Endothelial cell of umbilical vein (primary cell): ENCODE measurements at regions of chr11 and their contacts with region 1.

Region 1: DNA sequence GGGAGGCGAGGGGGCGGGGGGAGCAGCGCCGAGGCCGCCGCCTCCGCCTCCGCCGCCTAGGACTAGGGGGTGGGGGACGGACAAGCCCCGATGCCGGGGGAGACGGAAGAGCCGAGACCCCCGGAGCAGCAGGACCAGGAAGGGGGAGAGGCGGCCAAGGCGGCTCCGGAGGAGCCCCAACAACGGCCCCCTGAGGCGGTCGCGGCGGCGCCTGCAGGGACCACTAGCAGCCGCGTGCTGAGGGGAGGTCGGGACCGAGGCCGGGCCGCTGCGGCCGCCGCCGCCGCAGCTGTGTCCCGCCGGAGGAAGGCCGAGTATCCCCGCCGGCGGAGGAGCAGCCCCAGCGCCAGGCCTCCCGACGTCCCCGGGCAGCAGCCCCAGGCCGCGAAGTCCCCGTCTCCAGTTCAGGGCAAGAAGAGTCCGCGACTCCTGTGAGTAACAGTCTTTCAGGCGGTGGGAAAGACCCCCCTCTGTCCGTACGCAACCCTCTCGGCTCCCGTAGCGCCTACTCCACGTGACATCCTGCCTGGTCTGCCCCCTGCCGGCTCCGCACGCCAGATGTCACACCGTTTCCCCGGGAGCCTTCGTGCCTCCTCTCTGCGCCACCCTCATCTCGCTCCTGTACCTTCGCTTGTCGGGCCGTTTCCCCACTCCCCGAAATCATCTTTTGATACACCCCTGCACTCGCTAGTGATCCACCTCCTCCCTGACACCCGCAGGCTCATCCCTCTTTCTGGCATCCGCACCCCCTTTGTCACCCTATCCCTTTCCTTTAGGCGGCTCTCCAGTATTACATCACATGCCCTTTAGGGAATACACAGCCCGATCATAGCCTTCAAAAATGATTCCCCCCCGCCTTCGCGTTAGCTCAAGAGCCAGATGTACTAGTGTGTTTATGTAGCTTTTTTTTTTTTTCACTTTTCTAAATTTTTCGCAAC is 598 bp downstream of the ZFP91 start:
- DNase-seq: peak; percentile 88
- H3K4me3 ChIP-seq: peak overlapping the region; percentile 59 to 92 (median 76)
- H3K27ac ChIP-seq: peak overlapping the region; percentile 95
- H3K4me1 ChIP-seq: peaks cover 38% of the 10 kb centered on the region
- H3K27me3 ChIP-seq: no peaks in the 10 kb centered on the region
- CTCF ChIP-seq: peak; percentile 84 to 92
- POLR2A ChIP-seq: peak; percentile 97

Region 2: DNA sequence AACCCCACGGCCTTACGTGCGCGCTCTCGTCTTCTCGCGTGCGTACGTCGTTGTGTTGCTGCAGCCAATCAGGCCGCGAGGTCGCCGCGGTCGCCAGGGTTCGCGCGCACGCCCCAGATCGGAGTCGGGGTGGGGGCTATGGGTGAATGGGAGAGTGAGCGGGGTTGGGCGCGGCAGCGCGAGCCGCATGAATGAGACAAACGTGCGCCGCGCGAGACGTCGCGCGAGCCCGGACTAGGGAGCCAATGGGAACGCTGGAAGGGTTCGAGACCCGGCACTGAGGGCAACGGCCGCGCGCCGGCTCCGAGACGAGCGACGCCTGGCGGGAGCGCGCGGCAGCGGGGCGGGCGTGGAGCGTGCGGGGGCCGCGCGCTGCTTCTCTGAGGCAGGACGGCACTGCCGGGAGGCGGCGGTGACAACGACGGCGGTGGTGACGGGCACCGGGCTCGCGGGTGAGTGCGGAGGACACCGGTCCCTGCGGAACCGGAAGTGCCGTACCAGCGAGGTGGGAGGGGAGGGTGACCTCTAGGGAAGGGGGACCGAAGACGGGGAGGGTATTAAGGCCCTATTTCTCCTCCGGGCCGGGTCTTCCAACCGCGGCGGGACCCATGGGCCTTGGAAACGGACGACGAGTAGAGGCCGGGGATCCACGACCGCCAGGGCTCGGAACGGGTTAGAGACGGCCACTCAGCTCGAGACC is 911.6 kb before region 1 on chr11 and contains the start of gene ZDHHC5:
- CTCF ChIA-PET with region 1: no interaction called
- POLR2A ChIA-PET with region 1: no interaction called
- dilution Hi-C with region 1: no loop called
- intact Hi-C with region 1: loop called (anchors 1 kb)
- DNase-seq: peak; percentile 100
- H3K4me3 ChIP-seq: peak within 1 kb of the TSS; percentile 67 to 95 (median 77)
- H3K27ac ChIP-seq: peak within 1 kb of the TSS; percentile 98
- H3K4me1 ChIP-seq: peaks cover 15% of the 10 kb centered on the region
- H3K27me3 ChIP-seq: no peaks in the 10 kb centered on the region
- CTCF ChIP-seq: peak; percentile 53 to 56
- POLR2A ChIP-seq: peak; percentile 93
- total RNA-seq, gene ZDHHC5: 67.4 and 74.0 TPM in 2 replicates

Region 3: DNA sequence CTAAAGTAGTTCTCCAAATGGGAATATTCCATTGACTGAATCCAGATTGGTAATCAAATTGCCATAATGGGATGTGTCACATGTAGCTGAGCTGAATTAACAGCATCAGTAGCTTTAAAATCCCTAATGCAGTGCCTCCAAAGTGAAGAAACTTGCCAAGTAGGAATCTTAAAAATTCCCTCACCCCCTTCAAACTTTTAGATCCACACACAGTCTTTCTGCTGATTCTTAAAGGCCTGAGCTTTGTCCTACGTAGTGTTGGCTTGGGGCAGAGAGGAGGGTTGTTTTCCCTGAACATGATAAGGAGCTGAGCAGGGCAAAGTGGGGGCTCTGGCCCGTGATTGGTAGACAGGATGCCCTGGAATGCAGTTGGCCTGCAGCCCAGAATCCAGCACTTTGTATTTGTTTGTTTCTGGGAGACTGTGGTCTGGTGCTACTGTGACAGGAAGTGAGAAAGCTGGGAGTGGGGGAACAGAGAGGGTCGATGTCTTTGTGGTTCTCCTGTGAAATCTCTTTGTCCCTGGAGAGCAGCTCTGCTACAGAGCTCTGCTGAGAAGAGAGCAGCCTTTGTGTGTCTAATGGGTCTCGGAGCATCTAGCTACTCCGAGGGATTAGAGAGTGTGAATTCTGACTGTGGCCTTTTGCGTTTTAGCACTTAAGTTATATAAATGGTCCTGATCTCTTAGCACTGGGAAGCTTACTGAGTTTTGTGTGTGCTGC is 801.0 kb before region 1 on chr11:
- CTCF ChIA-PET with region 1: no interaction called
- POLR2A ChIA-PET with region 1: no interaction called
- dilution Hi-C with region 1: no loop called
- intact Hi-C with region 1: loop called (anchors 2 kb)
- DNase-seq: peak; percentile 100
- H3K4me3 ChIP-seq: peak overlapping the region in 1 of 3 experiments; percentile 56
- H3K27ac ChIP-seq: peak overlapping the region; percentile 91
- H3K4me1 ChIP-seq: peaks cover 81% of the 10 kb centered on the region
- H3K27me3 ChIP-seq: no peaks in the 10 kb centered on the region
- CTCF ChIP-seq: no peak
- POLR2A ChIP-seq: peak; percentile 93

Region 4: DNA sequence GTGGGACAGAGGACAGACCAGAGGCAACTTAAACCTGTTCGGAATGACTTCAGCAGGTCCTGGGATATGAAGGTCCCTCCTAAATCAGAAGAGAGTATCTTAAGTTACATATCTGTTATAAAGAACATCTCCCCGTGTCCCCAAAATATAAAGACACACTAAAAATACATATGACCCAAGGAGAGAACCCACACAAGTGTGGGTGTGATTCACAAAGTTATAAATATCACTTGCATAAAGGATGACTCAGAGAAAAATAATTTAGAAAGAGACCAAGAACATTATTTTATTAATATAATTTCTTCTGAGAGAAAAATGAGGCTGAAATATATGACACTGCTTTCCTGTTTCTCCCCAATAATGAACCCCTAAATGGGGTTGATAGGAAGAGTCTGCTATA is 85.8 kb before region 1 on chr11:
- CTCF ChIA-PET with region 1: no interaction called
- POLR2A ChIA-PET with region 1: no interaction called
- dilution Hi-C with region 1: no loop called
- intact Hi-C with region 1: no loop called
- DNase-seq: no peak
- H3K4me3 ChIP-seq: no peak overlapping the region
- H3K27ac ChIP-seq: no peak overlapping the region
- H3K4me1 ChIP-seq: no peaks in the 10 kb centered on the region
- H3K27me3 ChIP-seq: peaks cover 0 to 1% of the 10 kb centered on the region in 2 experiments
- CTCF ChIP-seq: no peak
- POLR2A ChIP-seq: no peak

Region 5: DNA sequence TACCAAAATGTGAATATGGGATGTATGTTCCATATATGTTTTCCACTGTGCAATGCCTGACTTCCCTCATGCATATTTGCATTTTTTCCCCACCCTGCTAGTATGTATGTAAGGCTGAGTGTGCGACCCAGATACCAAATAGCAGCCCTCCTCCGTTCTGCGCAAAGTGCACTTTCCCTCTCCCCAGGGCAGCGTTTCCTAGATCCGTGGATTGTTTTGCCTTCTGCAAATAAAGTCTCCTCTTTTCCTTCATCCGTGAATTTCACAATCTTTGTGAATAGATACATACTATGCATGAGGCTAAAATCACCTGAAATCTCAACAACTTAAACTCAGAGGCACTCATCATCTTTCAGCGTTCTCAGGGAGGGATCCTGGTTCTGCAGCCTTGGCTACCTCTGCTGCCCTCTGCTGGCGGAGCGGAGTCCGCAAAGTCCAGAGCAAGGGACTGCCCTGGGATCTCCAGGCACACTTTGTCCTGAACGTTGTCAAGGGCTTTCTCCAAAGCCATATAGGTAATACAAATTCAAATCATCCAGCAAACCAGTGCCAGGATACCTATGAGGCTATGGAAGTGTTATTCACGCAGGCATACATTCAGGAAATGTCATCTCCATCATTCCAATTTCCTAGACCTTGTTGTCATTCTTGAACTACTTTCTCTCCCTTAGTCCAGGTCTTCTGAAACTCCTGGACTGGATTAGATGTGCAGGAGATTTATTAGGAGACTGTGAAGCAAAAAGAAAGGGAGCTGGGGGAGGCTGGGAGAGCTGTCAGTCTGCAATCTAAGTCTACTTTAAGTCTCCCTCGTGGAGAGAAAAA is 96.1 kb after region 1 on chr11:
- CTCF ChIA-PET with region 1: interaction called, 7 read pairs
- POLR2A ChIA-PET with region 1: no interaction called
- dilution Hi-C with region 1: no loop called
- intact Hi-C with region 1: loop called (anchors 1 kb)
- DNase-seq: peak; percentile 49
- H3K4me3 ChIP-seq: no peak overlapping the region
- H3K27ac ChIP-seq: no peak overlapping the region
- H3K4me1 ChIP-seq: no peaks in the 10 kb centered on the region
- H3K27me3 ChIP-seq: no peaks in the 10 kb centered on the region
- CTCF ChIP-seq: peak; percentile 94 to 95
- POLR2A ChIP-seq: no peak

Region 6: DNA sequence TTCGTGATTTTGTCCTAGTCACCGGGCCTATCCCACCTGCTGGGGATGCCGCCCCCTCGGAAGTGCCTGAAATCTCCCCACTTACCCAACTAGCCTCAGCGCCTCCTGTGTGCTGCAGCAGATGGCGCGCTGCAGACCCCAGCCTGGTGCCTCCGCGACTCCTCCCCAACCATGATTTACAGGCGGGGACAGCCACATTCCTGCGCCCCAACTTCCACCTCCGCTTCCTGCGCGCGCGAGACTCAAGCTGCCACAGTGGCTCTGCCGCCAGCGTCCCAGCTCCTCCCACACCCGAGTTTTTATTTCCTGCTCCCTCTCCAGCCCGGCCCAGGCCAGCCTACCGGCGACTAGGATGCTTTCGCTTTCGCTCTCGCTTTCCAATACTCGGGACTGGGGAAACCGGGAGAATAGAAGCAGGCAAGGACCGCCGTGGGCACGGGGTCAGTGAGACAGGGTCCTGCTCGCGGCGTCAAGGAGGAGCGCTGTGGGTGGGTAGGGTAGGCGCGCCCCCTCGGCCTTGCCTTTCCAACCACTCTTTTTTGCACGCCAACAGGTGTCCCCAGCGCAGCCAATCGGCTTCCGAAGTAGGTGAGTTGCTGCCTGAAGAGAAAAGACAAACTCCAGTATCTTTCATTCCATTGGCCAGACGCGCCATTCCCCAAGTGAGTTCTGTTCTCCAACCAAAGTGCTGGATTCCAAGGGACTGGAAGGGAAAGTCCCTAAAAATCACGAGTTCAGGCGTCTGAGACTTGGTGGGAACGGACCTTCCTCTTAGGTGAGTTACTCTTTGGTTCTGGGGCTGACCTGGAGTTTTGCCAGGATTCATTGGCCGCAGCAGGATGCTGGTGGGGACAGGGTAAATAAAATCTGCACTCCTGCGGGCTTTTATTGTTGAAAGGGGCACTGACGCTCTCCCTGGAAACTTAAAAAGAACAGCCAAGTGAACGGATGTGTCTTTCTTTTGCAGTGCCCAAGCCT is 563.4 kb after region 1 on chr11 and contains the start of gene FAM111A:
- CTCF ChIA-PET with region 1: no interaction called
- POLR2A ChIA-PET with region 1: no interaction called
- dilution Hi-C with region 1: no loop called
- intact Hi-C with region 1: loop called (anchors 2 kb)
- DNase-seq: peak; percentile 91
- H3K4me3 ChIP-seq: peak within 1 kb of the TSS; percentile 69 to 90 (median 74)
- H3K27ac ChIP-seq: peak within 1 kb of the TSS; percentile 74
- H3K4me1 ChIP-seq: peaks cover 32% of the 10 kb centered on the region
- H3K27me3 ChIP-seq: no peaks in the 10 kb centered on the region
- CTCF ChIP-seq: peak; percentile 17 to 47
- POLR2A ChIP-seq: peak; percentile 66
- total RNA-seq, gene FAM111A: 53.0 and 57.4 TPM in 2 replicates